HCT116 (cell line): ENCODE measurements at regions of chr11 and their contacts with region 1.

Region 1: DNA sequence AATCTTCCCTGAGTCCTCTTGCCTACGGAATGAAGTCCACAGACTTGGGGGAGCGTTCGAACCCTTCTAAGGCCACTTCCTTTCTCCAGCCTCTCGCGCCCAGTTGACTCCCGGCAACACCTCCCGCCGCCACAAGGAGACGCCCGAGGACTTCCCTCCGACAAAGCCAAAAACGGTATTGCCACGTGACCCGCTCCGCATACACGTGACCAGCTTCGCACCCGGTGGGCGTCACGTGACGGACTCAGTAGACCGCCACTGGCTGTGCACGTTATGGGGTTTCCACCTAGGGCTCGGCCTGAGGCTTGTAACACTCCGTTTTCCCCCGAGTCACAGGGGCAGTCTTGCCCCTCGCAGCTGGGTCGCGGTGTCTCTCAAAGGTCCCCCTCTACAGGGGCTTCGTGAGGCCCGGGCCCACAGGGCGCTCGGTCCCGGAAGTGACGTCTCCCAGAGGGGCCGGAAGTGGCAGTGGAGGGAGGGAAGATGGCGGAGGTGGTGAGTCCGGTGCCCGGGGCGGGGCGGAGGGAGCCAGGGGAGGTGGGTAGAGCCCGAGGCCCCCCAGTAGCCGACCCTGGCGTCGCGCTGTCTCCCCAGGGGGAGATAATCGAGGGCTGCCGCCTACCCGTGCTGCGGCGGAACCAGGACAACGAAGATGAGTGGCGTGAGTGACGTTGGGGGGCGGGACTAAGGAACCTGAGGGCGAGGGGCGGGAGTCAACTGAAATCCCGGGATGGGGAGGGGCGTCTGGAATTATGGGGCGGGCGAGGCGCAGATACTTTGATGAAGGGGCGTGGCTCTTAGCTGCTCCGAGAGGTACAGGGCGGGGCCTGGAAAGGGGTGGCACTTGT is at the start of gene KAT5:
- DNase-seq: peak; percentile 98
- ATAC-seq: peak; percentile 80
- H3K4me3 ChIP-seq: peak within 1 kb of the TSS; percentile 64 to 72
- H3K27ac ChIP-seq: peak within 1 kb of the TSS; percentile 93
- H3K4me1 ChIP-seq: peaks cover 10 to 33% of the 10 kb centered on the region in 2 experiments; a peak in 3 of 4 replicates
- H3K27me3 ChIP-seq: no peaks in the 10 kb centered on the region
- CTCF ChIP-seq: peak in 2 of 3 experiments; percentile 94 to 97; a peak in 4 of 6 replicates
- POLR2A ChIP-seq: peak; percentile 23
- RAD21 ChIP-seq: no peak
- total RNA-seq, gene KAT5: 78.7 TPM

Region 2: DNA sequence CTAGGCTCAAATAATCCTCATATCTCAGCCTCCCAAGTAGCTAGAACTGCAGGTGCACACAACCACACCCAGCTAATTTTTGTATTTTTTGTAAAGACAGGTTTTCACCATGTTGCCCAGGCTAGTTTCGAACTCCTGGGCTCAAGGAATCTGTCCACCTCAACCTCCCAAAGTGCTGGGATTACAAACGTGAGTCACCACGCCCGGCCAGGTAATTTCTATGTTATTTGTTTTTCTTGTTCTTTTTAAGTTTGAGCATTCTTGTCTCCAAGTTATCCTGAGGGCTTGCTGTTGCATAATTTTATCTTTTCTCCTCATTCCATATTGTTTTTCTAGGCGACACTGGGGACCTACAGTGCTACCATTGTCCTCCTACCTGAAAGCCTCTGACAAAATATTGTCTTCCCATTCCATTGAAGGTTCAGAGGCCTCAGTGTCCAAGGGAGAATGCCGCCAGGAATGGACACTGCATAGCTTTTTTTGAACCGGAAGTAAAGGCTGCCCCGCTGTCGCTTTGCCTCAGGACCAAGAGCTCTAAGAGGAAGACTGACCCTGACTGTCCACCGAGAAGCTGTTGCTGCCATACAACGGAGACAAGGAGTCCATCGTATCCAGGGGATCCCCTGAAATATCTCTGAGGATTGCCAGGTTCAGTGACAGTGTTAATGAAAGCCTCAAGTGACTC is 59.0 kb after region 1 on chr11:
- CTCF ChIA-PET with region 1: interaction called, 11 read pairs
- POLR2A ChIA-PET with region 1: interaction called, 5 read pairs
- RAD21 ChIA-PET with region 1: interaction called in 1 of 2 experiments, 3 read pairs
- intact Hi-C with region 1: no loop called
- DNase-seq: no peak
- ATAC-seq: no peak
- H3K4me3 ChIP-seq: no peak overlapping the region
- H3K27ac ChIP-seq: no peak overlapping the region
- H3K4me1 ChIP-seq: peaks cover 2 to 16% of the 10 kb centered on the region in 2 experiments; a peak in 2 of 4 replicates
- H3K27me3 ChIP-seq: no peaks in the 10 kb centered on the region
- CTCF ChIP-seq: no peak
- POLR2A ChIP-seq: no peak
- RAD21 ChIP-seq: no peak

Region 3: GRCh38 chr11:65817835-65818742 is 106.1 kb after region 1 on chr11:
- CTCF ChIA-PET with region 1: interaction called, 33 read pairs
- POLR2A ChIA-PET with region 1: interaction called, 8 read pairs
- RAD21 ChIA-PET with region 1: interaction called, 4 to 12 read pairs
- intact Hi-C with region 1: loop called (anchors 1 kb)
- DNase-seq: peak; percentile 76
- ATAC-seq: peak; percentile 94
- H3K4me3 ChIP-seq: peak overlapping the region; percentile 51 to 65
- H3K27ac ChIP-seq: peak overlapping the region; percentile 51; the same call in 1 of the 2 replicates
- H3K4me1 ChIP-seq: peaks cover 0 to 12% of the 10 kb centered on the region in 2 experiments; a peak in 2 of 4 replicates
- H3K27me3 ChIP-seq: no peaks in the 10 kb centered on the region
- CTCF ChIP-seq: peak; percentile 88 to 99 (median 97)
- POLR2A ChIP-seq: no peak
- RAD21 ChIP-seq: peak; percentile 96

Region 4: DNA sequence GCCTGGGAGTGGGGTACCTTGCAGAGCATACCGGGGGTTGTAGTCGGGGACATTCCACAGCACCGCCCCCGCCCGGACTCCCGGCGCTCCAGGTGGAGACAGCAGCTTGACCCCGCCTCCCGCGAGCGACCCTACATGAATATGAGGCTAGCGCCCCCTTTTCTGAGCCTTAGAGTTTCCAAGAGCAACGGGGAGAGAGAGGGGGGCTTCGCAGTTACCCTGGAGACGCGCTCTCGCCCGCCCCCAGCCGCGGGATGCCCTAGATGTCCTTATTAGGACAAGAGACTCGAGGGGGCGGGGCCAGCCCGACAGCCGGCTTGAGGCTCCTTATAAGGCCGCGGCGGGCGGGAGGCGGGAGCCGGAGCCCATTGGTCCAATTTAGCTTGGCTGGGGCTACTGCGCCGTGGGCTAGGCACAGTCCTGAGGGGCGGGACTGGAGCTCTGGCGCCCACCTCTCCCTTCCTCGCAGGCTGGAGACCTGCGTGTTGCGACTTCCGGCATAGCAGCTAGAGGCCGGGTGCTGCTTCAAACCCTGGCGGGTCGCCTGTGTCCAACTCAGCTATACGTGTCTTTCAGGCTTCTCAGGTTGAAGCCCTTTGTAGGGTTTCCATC is 147.3 kb after region 1 on chr11:
- CTCF ChIA-PET with region 1: interaction called, 17 read pairs
- POLR2A ChIA-PET with region 1: interaction called, 12 read pairs
- RAD21 ChIA-PET with region 1: interaction called in 1 of 2 experiments, 4 read pairs
- intact Hi-C with region 1: loop called (anchors 1 kb)
- DNase-seq: peak; percentile 95
- ATAC-seq: peak; percentile 66
- H3K4me3 ChIP-seq: peak overlapping the region; percentile 85 to 100
- H3K27ac ChIP-seq: peak overlapping the region; percentile 97
- H3K4me1 ChIP-seq: peaks cover 23 to 44% of the 10 kb centered on the region in 2 experiments
- H3K27me3 ChIP-seq: no peaks in the 10 kb centered on the region
- CTCF ChIP-seq: no peak
- POLR2A ChIP-seq: peak; percentile 78
- RAD21 ChIP-seq: no peak

Region 5: GRCh38 chr11:65888163-65888814 is 176.3 kb after region 1 on chr11 and contains the start of gene FIBP:
- CTCF ChIA-PET with region 1: interaction called, 28 read pairs
- POLR2A ChIA-PET with region 1: interaction called, 14 read pairs
- RAD21 ChIA-PET with region 1: interaction called, 4 to 6 read pairs
- intact Hi-C with region 1: loop called (anchors 1 kb)
- DNase-seq: peak; percentile 91
- ATAC-seq: peak; percentile 65
- H3K4me3 ChIP-seq: peak within 1 kb of the TSS; percentile 90 to 92
- H3K27ac ChIP-seq: peak within 1 kb of the TSS; percentile 97
- H3K4me1 ChIP-seq: peaks cover 18 to 73% of the 10 kb centered on the region in 2 experiments
- H3K27me3 ChIP-seq: no peaks in the 10 kb centered on the region
- CTCF ChIP-seq: peak in 2 of 3 experiments; percentile 68 to 78; a peak in 4 of 6 replicates
- POLR2A ChIP-seq: peak; percentile 63
- RAD21 ChIP-seq: no peak
- total RNA-seq, gene FIBP: 96.0 TPM

Region 6: GRCh38 chr11:66150140-66150539 is 438.1 kb after region 1 on chr11:
- CTCF ChIA-PET with region 1: no interaction called
- POLR2A ChIA-PET with region 1: no interaction called
- RAD21 ChIA-PET with region 1: no interaction called
- intact Hi-C with region 1: no loop called
- DNase-seq: no peak
- ATAC-seq: no peak
- H3K4me3 ChIP-seq: no peak overlapping the region
- H3K27ac ChIP-seq: no peak overlapping the region
- H3K4me1 ChIP-seq: no peaks in the 10 kb centered on the region
- H3K27me3 ChIP-seq: no peaks in the 10 kb centered on the region
- CTCF ChIP-seq: no peak
- POLR2A ChIP-seq: no peak
- RAD21 ChIP-seq: no peak